Activated B cell treated with CpG ODN at 0.5 μM for 24 hours (primary cell): ENCODE measurements at regions of chr7 and their contacts with region 1.

Region 1: GRCh38 chr7:140673063-140673773 is 473 bp downstream of the ADCK2 start:
- DNase-seq: peak; percentile 67
- ATAC-seq: peak; percentile 58
- H3K4me3 Mint-ChIP-seq: peak overlapping the region; percentile 88
- H3K27ac Mint-ChIP-seq: peak overlapping the region; percentile 86
- H3K4me1 Mint-ChIP-seq: peaks cover 57% of the 10 kb centered on the region
- H3K27me3 Mint-ChIP-seq: no peaks in the 10 kb centered on the region
- CTCF ChIP-seq: no peak

Region 2: DNA sequence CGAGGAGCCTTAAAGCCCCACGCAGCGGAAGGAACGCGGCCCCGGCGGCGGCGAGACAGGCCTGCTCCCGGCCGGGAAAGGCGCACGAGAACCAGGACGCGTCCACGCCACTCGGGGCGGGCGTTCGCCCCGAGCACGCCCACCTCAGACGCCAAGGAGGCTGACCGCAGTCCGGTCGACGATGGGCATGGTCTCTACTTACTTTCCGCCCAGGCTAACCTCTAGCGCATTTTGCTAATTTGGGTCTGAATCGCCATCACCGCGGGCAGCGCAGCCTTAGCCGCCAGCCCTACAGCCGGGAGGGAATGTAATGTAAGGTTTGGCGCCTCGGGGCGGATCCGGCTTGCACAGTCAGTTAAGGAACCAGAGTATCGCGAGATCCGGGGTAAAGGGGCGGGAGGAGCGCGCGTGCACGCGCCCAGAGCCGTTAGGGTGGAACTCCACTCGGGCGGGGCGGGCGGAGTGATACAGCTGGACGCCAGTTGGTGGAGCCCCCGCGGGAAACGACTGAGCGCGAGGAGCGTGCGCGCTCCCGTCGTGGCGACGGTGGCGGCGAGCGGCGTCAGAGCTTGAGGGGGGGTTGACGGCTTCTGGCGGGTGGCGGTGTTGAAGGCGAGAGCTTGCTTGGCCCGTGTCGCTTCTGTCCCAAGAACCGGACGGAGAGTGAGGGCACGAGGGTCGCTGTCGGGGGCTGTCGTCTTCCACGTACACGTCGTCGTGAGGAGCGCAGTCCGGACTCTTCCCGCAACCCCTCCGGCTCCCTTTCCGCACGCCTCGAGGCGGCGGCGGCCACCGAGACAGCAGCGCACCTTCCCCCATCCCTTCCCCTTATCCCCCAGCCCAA is 1313.6 kb before region 1 on chr7 and contains the start of gene LUC7L2:
- CTCF ChIA-PET with region 1: no interaction called
- POLR2A ChIA-PET with region 1: no interaction called
- intact Hi-C with region 1: loop called (anchors 10 kb)
- DNase-seq: peak; percentile 97
- ATAC-seq: peak; percentile 78
- H3K4me3 Mint-ChIP-seq: peak within 1 kb of the TSS; percentile 98
- H3K27ac Mint-ChIP-seq: peak within 1 kb of the TSS; percentile 100
- H3K4me1 Mint-ChIP-seq: peaks cover 41% of the 10 kb centered on the region
- H3K27me3 Mint-ChIP-seq: no peaks in the 10 kb centered on the region
- CTCF ChIP-seq: no peak
- total RNA-seq, gene LUC7L2: 94.0 and 118 TPM in 2 replicates

Region 3: GRCh38 chr7:140653319-140654108 is 19.7 kb before region 1 on chr7:
- CTCF ChIA-PET with region 1: interaction called, 5 read pairs
- POLR2A ChIA-PET with region 1: interaction called, 4 read pairs
- intact Hi-C with region 1: loop called (anchors 1 kb)
- DNase-seq: peak; percentile 28
- ATAC-seq: no peak
- H3K4me3 Mint-ChIP-seq: no peak overlapping the region
- H3K27ac Mint-ChIP-seq: no peak overlapping the region
- H3K4me1 Mint-ChIP-seq: peaks cover 20% of the 10 kb centered on the region
- H3K27me3 Mint-ChIP-seq: peaks cover 2% of the 10 kb centered on the region
- CTCF ChIP-seq: peak; percentile 31

Region 4: DNA sequence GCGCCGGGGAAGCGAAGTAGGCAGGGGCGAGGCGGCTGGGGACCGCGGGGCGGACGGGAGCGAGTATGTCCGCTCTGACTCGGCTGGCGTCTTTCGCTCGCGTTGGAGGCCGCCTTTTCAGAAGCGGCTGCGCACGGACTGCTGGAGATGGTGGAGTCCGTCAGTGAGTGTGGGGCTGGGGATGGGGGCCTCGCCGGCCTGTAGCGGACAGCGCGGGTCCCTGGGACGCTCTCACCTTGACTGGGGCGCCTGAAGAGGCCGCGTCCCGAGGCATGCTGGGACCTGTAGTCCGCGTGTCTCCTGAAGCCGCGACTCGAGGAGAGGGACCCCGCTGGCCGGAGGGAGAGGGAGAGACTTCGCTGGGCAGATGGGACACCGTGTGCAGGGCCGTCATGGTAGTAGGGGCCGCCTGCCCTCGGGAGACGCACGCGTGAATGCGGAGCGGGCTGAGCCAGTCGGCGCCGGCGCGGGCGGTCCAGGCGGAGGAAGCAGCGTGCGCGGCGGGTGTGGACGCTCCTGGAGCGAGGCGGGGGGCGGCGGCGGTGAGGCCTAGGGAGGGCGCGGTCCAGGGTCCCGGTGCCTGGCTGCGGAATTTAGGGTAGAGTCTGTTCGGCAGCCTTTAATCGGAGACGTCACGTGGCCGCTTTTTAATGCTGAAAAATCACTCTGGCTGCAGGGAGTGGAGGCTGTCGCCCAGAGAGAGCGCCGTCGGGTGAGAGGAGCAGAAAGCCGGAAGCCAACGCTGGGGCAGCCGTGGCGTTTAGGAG is 23.6 kb after region 1 on chr7 and contains the start of gene NDUFB2:
- CTCF ChIA-PET with region 1: no interaction called
- POLR2A ChIA-PET with region 1: interaction called, 8 read pairs
- intact Hi-C with region 1: loop called (anchors 1 kb)
- DNase-seq: peak; percentile 90
- ATAC-seq: peak; percentile 86
- H3K4me3 Mint-ChIP-seq: peak within 1 kb of the TSS; percentile 94
- H3K27ac Mint-ChIP-seq: peak within 1 kb of the TSS; percentile 98
- H3K4me1 Mint-ChIP-seq: peaks cover 34% of the 10 kb centered on the region
- H3K27me3 Mint-ChIP-seq: no peaks in the 10 kb centered on the region
- CTCF ChIP-seq: no peak
- total RNA-seq, gene NDUFB2: 140 and 168 TPM in 2 replicates